B cell (primary cell): ENCODE measurements at regions of chr20 and their contacts with region 1.

Region 1: DNA sequence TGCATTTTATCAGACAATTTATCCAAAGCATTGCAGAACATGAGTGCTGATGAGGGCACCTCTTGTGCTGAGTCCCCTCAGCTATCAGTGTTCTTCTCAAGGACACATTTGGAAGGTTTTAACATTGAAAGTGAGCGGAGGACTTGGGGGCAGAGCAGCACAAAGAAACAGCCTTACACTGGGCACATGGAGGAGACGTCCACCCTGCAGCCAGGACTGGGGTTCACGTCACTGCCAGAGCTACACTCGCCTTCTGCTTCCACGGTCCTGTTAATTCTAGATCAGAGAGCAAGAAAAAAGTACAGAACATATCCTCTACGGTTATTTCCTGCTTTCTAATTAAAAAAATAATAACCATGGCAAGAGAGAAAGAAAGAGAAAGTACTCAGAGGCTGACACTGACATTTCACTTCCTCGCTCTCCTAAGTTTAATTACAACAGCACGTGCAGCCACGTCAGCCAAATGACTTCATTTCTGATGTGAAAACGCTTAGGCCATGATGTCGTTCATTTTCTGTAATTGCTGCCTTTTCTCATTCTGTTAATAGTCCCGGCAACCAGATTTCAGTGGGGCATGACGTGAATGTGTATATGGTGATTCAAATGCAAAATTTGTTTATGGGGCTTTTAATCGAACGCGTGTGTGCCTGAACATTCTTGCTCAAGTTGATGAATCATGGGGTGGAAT is 5.1 kb downstream of the PRND start:
- DNase-seq: peak; percentile 89
- ATAC-seq: peak; percentile 80
- H3K4me3 ChIP-seq: peak overlapping the region in 4 of 5 experiments; percentile 27 to 50 (median 42)
- H3K4me3 Mint-ChIP-seq: peak overlapping the region; percentile 85
- H3K27ac ChIP-seq: peak overlapping the region; percentile 75 to 86
- H3K27ac Mint-ChIP-seq: peak overlapping the region; percentile 87
- H3K4me1 ChIP-seq: peaks cover 14 to 17% of the 10 kb centered on the region in 2 donors
- H3K4me1 Mint-ChIP-seq: peaks cover 18% of the 10 kb centered on the region
- H3K27me3 ChIP-seq: peaks cover 0 to 6% (median 0%) of the 10 kb centered on the region in 4 experiments
- H3K27me3 Mint-ChIP-seq: no peaks in the 10 kb centered on the region
- CTCF ChIP-seq: no peak

Region 2: DNA sequence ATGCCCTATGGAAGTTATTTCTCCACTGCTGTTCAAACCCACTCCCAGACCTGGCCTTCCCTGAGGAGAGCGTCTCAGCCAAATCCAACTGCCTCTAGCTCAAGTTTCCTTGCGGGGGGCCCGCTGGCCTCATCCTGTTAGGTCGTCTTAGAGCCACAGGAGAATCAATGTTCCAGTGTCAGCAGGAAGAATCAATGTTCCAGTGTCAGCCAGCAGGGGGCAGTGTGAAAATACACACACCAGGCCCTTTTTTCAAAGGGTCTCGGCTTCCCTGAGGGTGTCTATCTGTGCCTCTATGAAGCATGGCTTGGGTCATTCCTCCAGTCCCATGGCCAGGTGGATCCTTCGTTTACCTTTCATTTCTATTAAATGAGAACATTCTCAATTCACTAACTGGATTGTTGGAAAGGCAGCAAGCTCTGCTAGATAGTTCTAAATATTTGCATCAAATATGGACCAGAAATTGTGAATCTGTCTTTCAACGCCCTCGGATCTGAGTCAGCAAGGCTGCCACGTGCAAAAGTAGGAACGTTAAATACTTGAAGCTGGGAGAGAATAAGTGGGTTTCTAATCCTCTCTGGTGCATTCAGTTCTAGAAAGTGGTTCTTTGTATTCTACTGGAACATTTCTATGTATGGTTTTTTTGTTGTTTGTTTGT is 14.0 kb after region 1 on chr20:
- CTCF ChIA-PET with region 1: interaction called, 15 read pairs
- POLR2A ChIA-PET with region 1: no interaction called
- intact Hi-C with region 1: no loop called
- DNase-seq: peak; percentile 76
- ATAC-seq: peak; percentile 56
- H3K4me3 ChIP-seq: no peak overlapping the region
- H3K4me3 Mint-ChIP-seq: no peak overlapping the region
- H3K27ac ChIP-seq: no peak overlapping the region
- H3K27ac Mint-ChIP-seq: no peak overlapping the region
- H3K4me1 ChIP-seq: peaks cover 0 to 3% of the 10 kb centered on the region in 2 donors
- H3K4me1 Mint-ChIP-seq: peaks cover 6% of the 10 kb centered on the region
- H3K27me3 ChIP-seq: peaks cover 0 to 3% (median 1%) of the 10 kb centered on the region in 4 experiments
- H3K27me3 Mint-ChIP-seq: peaks cover 14% of the 10 kb centered on the region
- CTCF ChIP-seq: peak; percentile 94

Region 3: DNA sequence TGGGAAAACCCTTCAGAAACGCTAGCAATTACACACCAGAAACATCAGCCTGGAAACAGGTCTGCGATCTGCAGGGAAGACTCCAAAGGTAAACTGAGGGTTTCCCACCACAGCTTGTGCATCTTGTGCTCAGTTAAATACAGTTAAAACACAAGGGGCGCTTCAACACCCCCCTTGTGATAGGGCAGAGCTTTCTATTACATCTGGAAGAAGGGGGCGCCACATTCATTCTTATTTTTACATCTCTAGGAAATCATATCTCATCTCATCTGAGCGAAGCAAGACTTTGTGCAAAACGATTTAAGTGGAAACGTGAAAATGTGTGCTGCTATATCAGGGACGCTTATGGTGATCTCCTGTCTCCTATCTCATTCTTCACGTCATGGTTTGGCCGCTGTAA is 53.4 kb after region 1 on chr20:
- CTCF ChIA-PET with region 1: no interaction called
- POLR2A ChIA-PET with region 1: no interaction called
- intact Hi-C with region 1: no loop called
- DNase-seq: no peak
- ATAC-seq: no peak
- H3K4me3 ChIP-seq: no peak overlapping the region
- H3K4me3 Mint-ChIP-seq: no peak overlapping the region
- H3K27ac ChIP-seq: peak overlapping the region in 1 of 2 donors; percentile 63
- H3K27ac Mint-ChIP-seq: peak overlapping the region; percentile 78
- H3K4me1 ChIP-seq: no peaks in the 10 kb centered on the region
- H3K4me1 Mint-ChIP-seq: peaks cover 2% of the 10 kb centered on the region
- H3K27me3 ChIP-seq: no peaks in the 10 kb centered on the region
- H3K27me3 Mint-ChIP-seq: no peaks in the 10 kb centered on the region
- CTCF ChIP-seq: no peak